Transverse colon (tissue), 4 donors: ENCODE measurements at regions of chr2 and their contacts with region 1.

Region 1: DNA sequence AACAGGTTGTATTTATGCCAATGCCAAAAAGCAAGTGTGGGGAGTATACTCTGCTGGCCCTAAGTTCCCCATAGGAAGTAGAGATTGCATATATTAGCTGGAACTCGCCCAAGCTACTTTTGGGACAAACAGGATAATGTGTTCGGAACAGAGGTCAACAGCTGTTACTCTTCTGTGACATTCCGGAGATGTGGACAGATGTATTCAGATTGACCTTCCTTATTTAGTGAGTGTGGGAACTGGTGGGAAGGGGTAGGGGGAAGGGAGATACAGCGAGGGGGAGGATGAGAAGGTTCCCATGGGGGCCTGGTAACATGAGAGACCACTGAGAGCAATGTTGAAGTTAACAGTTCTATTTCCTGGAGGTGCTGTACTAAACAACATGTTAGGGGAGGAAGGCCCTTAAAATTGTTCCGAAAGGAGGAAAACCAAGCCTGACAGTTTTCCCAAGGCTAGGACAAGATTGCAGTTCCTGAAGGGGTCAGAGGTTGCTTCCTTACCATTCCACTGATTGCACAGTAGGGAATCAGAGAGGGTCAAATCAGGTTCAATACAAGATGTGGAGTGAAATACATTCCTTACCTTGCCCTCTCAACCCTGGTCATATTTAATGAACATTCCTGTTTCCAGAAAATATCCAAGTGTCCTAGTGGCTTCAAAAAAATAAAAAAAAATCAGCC is 14.3 kb upstream of the CD28 start:
- DNase-seq: no peak
- H3K4me3 ChIP-seq: no peak overlapping the region
- H3K27ac ChIP-seq: peak overlapping the region in 1 of 4 donors; percentile 4
- H3K4me1 ChIP-seq: peaks cover 0 to 8% (median 3%) of the 10 kb centered on the region in 4 donors
- H3K27me3 ChIP-seq: no peaks in the 10 kb centered on the region
- CTCF ChIP-seq: no peak
- EP300 ChIP-seq: no peak
- POLR2A ChIP-seq: no peak

Region 2: DNA sequence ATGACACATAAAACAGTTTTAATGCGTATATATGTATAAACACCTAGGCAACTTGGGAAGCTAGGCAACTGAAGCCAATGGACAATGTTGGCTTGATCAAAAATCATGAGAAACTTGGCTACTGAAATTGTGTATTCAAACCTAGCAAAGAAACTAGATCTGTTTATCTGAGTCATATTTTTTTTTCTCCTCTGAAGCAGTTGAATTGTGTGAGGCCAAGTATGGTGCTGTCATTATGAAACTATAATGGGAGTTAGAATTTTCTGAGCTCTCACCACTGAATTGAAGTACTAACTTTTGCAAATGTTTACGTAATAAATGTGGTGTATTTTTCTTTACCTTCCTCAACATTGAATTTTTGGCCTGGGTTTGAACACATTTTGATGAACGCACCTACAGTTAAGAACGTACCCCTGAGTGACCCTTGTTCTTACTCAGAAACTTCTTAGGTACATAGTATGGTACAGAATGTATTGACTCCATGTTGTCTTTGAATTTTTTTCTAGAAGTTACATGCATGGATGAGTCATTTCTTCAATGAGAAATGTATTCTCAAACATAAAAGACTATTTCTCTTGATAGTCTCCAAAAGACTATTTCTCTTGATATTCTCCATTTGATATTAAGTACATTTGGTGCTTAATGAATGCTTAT is 38.0 kb after region 1 on chr2:
- in situ Hi-C with region 1: no loop called
- intact Hi-C with region 1: loop called (anchors 1 kb)
- DNase-seq: no peak
- H3K4me3 ChIP-seq: no peak overlapping the region
- H3K27ac ChIP-seq: no peak overlapping the region
- H3K4me1 ChIP-seq: peaks cover 0 to 3% (median 0%) of the 10 kb centered on the region in 4 donors
- H3K27me3 ChIP-seq: no peaks in the 10 kb centered on the region
- CTCF ChIP-seq: no peak
- EP300 ChIP-seq: no peak
- POLR2A ChIP-seq: no peak

Region 3: DNA sequence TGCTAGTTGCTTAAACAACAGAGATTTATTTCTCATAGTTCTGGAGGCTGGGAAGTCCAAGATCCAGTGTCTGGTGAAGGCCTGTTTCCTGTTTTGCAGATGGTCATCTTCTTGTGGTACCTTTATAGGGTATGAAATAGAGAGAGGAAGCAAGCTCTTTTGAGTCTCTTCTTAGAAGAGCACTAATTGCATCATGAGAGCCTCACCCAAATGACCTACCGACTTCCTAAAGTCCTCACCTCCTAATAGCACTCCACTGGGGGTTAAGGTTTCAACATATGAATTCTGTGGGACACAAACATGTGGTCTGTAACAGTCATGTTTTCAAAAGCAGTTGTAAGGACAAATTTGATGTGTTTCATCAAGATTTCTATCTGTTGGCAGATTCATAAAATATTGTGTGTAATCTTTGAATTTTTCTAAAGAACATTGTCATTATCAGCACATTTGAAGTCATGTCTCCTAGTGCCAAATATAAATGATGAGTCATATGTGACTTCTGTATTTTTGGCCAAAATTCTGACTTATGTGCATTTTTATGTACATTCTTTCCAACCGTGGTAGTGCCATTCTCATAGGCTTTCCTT is 59.6 kb after region 1 on chr2:
- in situ Hi-C with region 1: no loop called
- intact Hi-C with region 1: loop called (anchors 2 kb)
- DNase-seq: no peak
- H3K4me3 ChIP-seq: no peak overlapping the region
- H3K27ac ChIP-seq: no peak overlapping the region
- H3K4me1 ChIP-seq: no peaks in the 10 kb centered on the region
- H3K27me3 ChIP-seq: no peaks in the 10 kb centered on the region
- CTCF ChIP-seq: no peak
- EP300 ChIP-seq: no peak
- POLR2A ChIP-seq: no peak

Region 4: DNA sequence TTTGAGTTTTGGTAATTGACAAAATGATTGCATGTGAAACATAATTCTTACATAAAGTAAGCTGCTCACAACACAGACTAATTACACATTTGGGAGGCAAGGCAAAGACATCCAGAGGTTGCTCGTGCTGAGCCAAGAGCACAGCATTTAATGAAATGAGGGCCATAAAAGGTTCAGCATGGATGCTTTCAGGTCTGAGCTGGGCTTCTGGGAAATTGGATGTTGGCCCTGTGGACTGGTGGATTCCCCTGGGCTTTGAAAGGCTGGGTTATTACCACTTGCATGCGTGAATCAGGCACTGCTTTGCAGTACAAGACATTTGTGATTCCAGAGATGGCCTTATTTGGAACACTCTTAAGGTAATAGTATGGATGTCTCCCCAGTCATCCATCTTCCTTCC is 1456.6 kb after region 1 on chr2:
- in situ Hi-C with region 1: no loop called
- intact Hi-C with region 1: no loop called
- DNase-seq: no peak
- H3K4me3 ChIP-seq: no peak overlapping the region
- H3K27ac ChIP-seq: no peak overlapping the region
- H3K4me1 ChIP-seq: no peaks in the 10 kb centered on the region
- H3K27me3 ChIP-seq: no peaks in the 10 kb centered on the region
- CTCF ChIP-seq: no peak
- EP300 ChIP-seq: no peak
- POLR2A ChIP-seq: no peak